CD4-positive, alpha-beta memory T cell (primary cell): ENCODE measurements at regions of chr11 and their contacts with region 1.

Region 1: GRCh38 chr11:13335319-13335718 is 57.7 kb downstream of the BMAL1 start:
- DNase-seq: peak; percentile 70 to 73 (median 71)
- H3K4me3 ChIP-seq: no peak overlapping the region
- H3K4me3 Mint-ChIP-seq: peak overlapping the region in 2 of 8 donors; percentile 2 to 9
- H3K27ac ChIP-seq: no peak overlapping the region
- H3K27ac Mint-ChIP-seq: peak overlapping the region; percentile 0 to 87 (median 26)
- H3K4me1 ChIP-seq: peaks cover 90% of the 10 kb centered on the region
- H3K4me1 Mint-ChIP-seq: peaks cover 60 to 89% (median 75%) of the 10 kb centered on the region in 4 donors
- H3K27me3 ChIP-seq: no peaks in the 10 kb centered on the region
- H3K27me3 Mint-ChIP-seq: no peaks in the 10 kb centered on the region

Region 2: DNA sequence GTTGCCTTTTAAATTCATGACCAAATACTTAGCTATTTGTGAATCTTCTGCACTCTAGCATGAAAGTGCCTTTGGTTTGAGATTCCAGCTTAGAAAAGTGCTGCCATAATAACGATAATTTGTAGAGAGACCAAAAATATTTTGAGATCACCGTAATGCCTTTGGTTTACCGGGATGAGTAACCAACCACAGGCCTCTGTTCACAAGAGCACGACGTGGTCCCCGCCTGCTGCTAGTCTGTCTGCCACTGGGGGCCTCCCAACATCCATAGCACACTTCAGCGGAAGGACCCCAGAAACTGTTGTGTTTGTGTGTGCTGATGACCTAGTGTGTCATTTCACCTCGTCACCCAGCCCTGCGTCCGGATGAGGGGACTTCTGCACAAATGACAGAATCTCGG is 393.2 kb before region 1 on chr11:
- CTCF ChIA-PET with region 1: no interaction called
- POLR2A ChIA-PET with region 1: no interaction called
- intact Hi-C with region 1: no loop called
- DNase-seq: no peak
- H3K4me3 ChIP-seq: no peak overlapping the region
- H3K4me3 Mint-ChIP-seq: no peak overlapping the region
- H3K27ac ChIP-seq: no peak overlapping the region
- H3K27ac Mint-ChIP-seq: no peak overlapping the region
- H3K4me1 ChIP-seq: no peaks in the 10 kb centered on the region
- H3K4me1 Mint-ChIP-seq: no peaks in the 10 kb centered on the region
- H3K27me3 ChIP-seq: no peaks in the 10 kb centered on the region
- H3K27me3 Mint-ChIP-seq: peaks cover 7 to 10% of the 10 kb centered on the region in 2 donors

Region 3: GRCh38 chr11:12963792-12964536 is 371.4 kb before region 1 on chr11:
- CTCF ChIA-PET with region 1: interaction called, 4 read pairs
- POLR2A ChIA-PET with region 1: no interaction called
- intact Hi-C with region 1: loop called (anchors 1 kb)
- DNase-seq: peak; percentile 41 to 60 (median 52)
- H3K4me3 ChIP-seq: no peak overlapping the region
- H3K4me3 Mint-ChIP-seq: no peak overlapping the region
- H3K27ac ChIP-seq: no peak overlapping the region
- H3K27ac Mint-ChIP-seq: peak overlapping the region in 1 of 7 donors; percentile 31
- H3K4me1 ChIP-seq: no peaks in the 10 kb centered on the region
- H3K4me1 Mint-ChIP-seq: no peaks in the 10 kb centered on the region
- H3K27me3 ChIP-seq: no peaks in the 10 kb centered on the region
- H3K27me3 Mint-ChIP-seq: peaks cover 18 to 21% of the 10 kb centered on the region in 2 donors

Region 4: GRCh38 chr11:13210424-13210823 is 124.9 kb before region 1 on chr11:
- CTCF ChIA-PET with region 1: interaction called, 33 read pairs
- POLR2A ChIA-PET with region 1: interaction called, 3 read pairs
- intact Hi-C with region 1: loop called (anchors 1 kb)
- DNase-seq: peak in 4 of 5 donors; percentile 13 to 20 (median 14)
- H3K4me3 ChIP-seq: no peak overlapping the region
- H3K4me3 Mint-ChIP-seq: no peak overlapping the region
- H3K27ac ChIP-seq: no peak overlapping the region
- H3K27ac Mint-ChIP-seq: peak overlapping the region in 2 of 7 donors; percentile 37 to 42
- H3K4me1 ChIP-seq: peaks cover 24% of the 10 kb centered on the region
- H3K4me1 Mint-ChIP-seq: peaks cover 17 to 34% (median 25%) of the 10 kb centered on the region in 4 donors
- H3K27me3 ChIP-seq: no peaks in the 10 kb centered on the region
- H3K27me3 Mint-ChIP-seq: no peaks in the 10 kb centered on the region

Region 5: DNA sequence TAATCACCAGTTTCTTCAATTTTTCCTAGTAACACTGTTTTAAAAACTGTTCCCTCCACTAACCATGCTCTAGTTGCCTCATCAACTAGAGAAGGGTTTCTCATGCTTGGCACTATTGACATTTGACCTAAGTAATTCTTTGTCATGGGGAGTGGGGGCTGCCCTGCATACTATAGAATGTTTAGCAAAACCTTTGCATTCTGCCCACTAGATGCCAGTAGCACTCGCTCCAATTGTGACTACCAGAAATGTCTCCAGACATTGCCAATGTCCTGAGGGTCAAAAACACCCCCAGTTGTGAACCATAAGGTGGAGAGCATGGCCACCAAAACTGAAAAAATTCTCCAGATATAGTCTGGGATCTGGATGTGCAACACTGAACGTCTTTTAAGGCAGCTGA is 85.3 kb before region 1 on chr11:
- CTCF ChIA-PET with region 1: interaction called, 28 read pairs
- POLR2A ChIA-PET with region 1: interaction called, 3 read pairs
- intact Hi-C with region 1: loop called (anchors 1 kb)
- DNase-seq: peak in 2 of 5 donors; percentile 4 to 9
- H3K4me3 ChIP-seq: no peak overlapping the region
- H3K4me3 Mint-ChIP-seq: no peak overlapping the region
- H3K27ac ChIP-seq: no peak overlapping the region
- H3K27ac Mint-ChIP-seq: no peak overlapping the region
- H3K4me1 ChIP-seq: no peaks in the 10 kb centered on the region
- H3K4me1 Mint-ChIP-seq: no peaks in the 10 kb centered on the region
- H3K27me3 ChIP-seq: peaks cover 6% of the 10 kb centered on the region
- H3K27me3 Mint-ChIP-seq: peaks cover 8 to 13% of the 10 kb centered on the region in 2 donors

Region 6: GRCh38 chr11:13261591-13262061 is 73.7 kb before region 1 on chr11:
- CTCF ChIA-PET with region 1: interaction called, 21 read pairs
- POLR2A ChIA-PET with region 1: no interaction called
- intact Hi-C with region 1: no loop called
- DNase-seq: no peak
- H3K4me3 ChIP-seq: no peak overlapping the region
- H3K4me3 Mint-ChIP-seq: no peak overlapping the region
- H3K27ac ChIP-seq: no peak overlapping the region
- H3K27ac Mint-ChIP-seq: peak overlapping the region in 1 of 7 donors; percentile 51
- H3K4me1 ChIP-seq: peaks cover 10% of the 10 kb centered on the region
- H3K4me1 Mint-ChIP-seq: peaks cover 18 to 24% (median 20%) of the 10 kb centered on the region in 4 donors
- H3K27me3 ChIP-seq: no peaks in the 10 kb centered on the region
- H3K27me3 Mint-ChIP-seq: no peaks in the 10 kb centered on the region

Region 7: DNA sequence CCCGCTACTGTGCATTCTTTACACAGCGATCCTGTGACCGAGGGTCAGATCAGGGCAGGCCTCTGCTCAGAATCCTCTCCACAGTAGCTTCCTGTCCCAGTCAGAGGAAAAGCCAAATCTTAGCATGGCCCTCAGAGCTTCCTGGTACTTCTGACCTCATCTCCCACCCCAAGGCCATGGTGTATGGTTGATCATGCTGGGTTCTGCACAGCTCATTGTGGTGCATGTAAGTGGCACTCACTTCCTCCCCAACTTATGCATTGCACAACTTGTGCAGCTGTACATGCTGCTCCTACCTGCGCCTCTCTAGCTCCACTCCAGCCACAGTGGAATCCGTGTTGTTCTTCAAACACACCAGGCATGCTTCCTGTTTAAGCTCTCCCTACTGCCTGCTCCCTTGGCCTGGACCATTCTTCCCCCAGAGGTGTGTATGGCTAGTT is 37.4 kb before region 1 on chr11:
- CTCF ChIA-PET with region 1: interaction called, 12 read pairs
- POLR2A ChIA-PET with region 1: interaction called, 4 read pairs
- intact Hi-C with region 1: no loop called
- DNase-seq: no peak
- H3K4me3 ChIP-seq: no peak overlapping the region
- H3K4me3 Mint-ChIP-seq: peak overlapping the region in 7 of 8 donors; percentile 4 to 71 (median 36)
- H3K27ac ChIP-seq: no peak overlapping the region
- H3K27ac Mint-ChIP-seq: peak overlapping the region in 6 of 7 donors; percentile 58 to 82 (median 74)
- H3K4me1 ChIP-seq: peaks cover 99% of the 10 kb centered on the region
- H3K4me1 Mint-ChIP-seq: peaks cover 0 to 87% (median 70%) of the 10 kb centered on the region in 4 donors
- H3K27me3 ChIP-seq: no peaks in the 10 kb centered on the region
- H3K27me3 Mint-ChIP-seq: no peaks in the 10 kb centered on the region